Activated T-helper 2 cell treated with anti-CD3 and anti-CD28 coated beads, Interferon-gamma antibody, Interleukin-2, Interleukin-4, amounts not matched to agents 10 μg/mL and 5 μg/mL and 100 μg/mL, durations not matched to agents 14 hours and 24 hours and 36 hours (primary cell): ENCODE measurements at regions of chr3 and their contacts with region 1.

Region 1: GRCh38 chr3:41881233-41881821 is 80.6 kb downstream of the ULK4 start:
- DNase-seq: no peak
- H3K4me3 Mint-ChIP-seq: no peak overlapping the region
- H3K27ac Mint-ChIP-seq: no peak overlapping the region
- H3K4me1 Mint-ChIP-seq: no peaks in the 10 kb centered on the region
- H3K27me3 Mint-ChIP-seq: no peaks in the 10 kb centered on the region

Region 2: DNA sequence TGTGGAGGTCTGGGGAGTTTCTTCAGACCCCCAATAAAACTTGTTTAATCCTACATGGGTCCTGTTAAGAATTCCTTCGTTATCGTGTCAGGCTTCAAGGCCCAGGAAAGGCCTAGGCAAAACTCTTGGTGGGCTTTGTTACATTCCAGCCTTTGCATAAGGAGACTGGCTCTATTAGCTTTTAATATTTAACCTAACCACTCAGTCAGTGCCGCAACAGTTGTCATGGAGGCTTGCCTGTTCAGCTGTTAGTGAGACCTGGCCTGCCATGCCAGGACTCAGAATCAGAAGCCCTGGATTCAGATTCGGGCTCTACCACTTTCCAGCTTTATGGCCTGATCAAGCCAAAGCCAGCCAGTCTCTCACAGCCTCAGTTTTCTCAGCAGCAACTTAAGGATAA is 1552.3 kb before region 1 on chr3:
- intact Hi-C with region 1: loop called (anchors 5 kb)
- DNase-seq: no peak
- H3K4me3 Mint-ChIP-seq: no peak overlapping the region
- H3K27ac Mint-ChIP-seq: no peak overlapping the region
- H3K4me1 Mint-ChIP-seq: peaks cover 4% of the 10 kb centered on the region
- H3K27me3 Mint-ChIP-seq: peaks cover 12% of the 10 kb centered on the region

Region 3: GRCh38 chr3:40580494-40581091 is 1300.7 kb before region 1 on chr3:
- intact Hi-C with region 1: loop called (anchors 1 kb)
- DNase-seq: peak; percentile 42
- H3K4me3 Mint-ChIP-seq: no peak overlapping the region
- H3K27ac Mint-ChIP-seq: no peak overlapping the region
- H3K4me1 Mint-ChIP-seq: peaks cover 3% of the 10 kb centered on the region
- H3K27me3 Mint-ChIP-seq: peaks cover 11% of the 10 kb centered on the region

Region 4: GRCh38 chr3:41698898-41699297 is 182.4 kb before region 1 on chr3:
- intact Hi-C with region 1: loop called (anchors 5 kb)
- DNase-seq: no peak
- H3K4me3 Mint-ChIP-seq: no peak overlapping the region
- H3K27ac Mint-ChIP-seq: no peak overlapping the region
- H3K4me1 Mint-ChIP-seq: no peaks in the 10 kb centered on the region
- H3K27me3 Mint-ChIP-seq: no peaks in the 10 kb centered on the region

Region 5: DNA sequence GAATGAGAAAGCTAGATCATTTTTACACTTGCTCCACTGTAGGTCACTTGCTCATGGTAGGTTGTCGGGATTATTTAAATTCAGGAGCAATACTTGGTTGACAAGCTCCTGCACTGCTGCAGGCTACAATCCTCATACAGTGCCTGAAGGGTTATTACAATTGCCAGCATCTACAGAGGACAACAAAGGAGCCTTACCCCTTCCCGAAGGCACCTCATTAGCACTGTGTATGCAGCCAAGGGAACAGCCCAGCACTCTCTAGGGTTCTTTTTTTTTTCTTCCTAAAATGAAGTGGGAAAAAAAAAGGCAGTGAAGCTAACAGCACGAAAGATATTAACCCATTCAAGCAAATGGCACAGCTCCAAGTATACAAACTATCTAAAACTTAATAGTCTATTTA is 62.1 kb before region 1 on chr3:
- intact Hi-C with region 1: no loop called
- DNase-seq: no peak
- H3K4me3 Mint-ChIP-seq: no peak overlapping the region
- H3K27ac Mint-ChIP-seq: no peak overlapping the region
- H3K4me1 Mint-ChIP-seq: no peaks in the 10 kb centered on the region
- H3K27me3 Mint-ChIP-seq: no peaks in the 10 kb centered on the region

Region 6: DNA sequence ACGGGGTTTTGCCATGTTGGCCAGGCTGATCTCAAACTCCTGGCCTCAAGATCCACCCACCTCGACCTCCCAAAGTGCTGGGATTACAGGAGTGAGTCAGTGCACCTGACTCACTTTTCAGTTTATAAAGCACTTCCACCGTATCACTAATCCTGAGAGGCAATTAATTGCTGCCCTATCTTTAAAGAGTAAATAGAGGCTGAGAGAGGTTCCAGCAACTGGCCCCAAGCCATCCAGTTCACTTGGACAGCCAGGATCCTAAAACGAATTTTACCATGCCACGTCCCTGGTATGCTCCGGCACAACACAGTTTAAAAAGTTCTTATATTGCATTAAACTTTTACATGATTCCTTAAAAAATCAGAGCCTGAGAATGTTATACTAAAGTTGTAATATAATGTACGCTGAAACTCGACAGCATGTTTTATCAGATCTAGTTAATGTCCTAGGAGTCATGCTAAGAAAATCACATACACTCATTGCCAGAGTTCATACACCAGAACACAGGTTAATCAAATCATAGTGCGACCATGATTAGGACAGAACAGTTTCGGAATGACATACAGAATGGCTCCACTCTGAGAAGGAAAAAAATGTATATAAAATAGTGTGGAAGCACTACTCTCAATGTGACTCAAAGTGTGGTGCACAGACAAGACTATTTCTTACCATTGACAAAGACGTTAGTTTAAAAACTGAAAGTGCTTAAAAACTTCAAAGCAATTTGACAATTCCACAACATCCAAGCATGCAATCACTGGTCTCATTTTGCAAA is 44.8 kb before region 1 on chr3:
- intact Hi-C with region 1: no loop called
- DNase-seq: no peak
- H3K4me3 Mint-ChIP-seq: no peak overlapping the region
- H3K27ac Mint-ChIP-seq: peak overlapping the region; percentile 22
- H3K4me1 Mint-ChIP-seq: peaks cover 8% of the 10 kb centered on the region
- H3K27me3 Mint-ChIP-seq: no peaks in the 10 kb centered on the region